ENCODE measurements at regions of chr9 and their contacts with region 1.

Region 1: DNA sequence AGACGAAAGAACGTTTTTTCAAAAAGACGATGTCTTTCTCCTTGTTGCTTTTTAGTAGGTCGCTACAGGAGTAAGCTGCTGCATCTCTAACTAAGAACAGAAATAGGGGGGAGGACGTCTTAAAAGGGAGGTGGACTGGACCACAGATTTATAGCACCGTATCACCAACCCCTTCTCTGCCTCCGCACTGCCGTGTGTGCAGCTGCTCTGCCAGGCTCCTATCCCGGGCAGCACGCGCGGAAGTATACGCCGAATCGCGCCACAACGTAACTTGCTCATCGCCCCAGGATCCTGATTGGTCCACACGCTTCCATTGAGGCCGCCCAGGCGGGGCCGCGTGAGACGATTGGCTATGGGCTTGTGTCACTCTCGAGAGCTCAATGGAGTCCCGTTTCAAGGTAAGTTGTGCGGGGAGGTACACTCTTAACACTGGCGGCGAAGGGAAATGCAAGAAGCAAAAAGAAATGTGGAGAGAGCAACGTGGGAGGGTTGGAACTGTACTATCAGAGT is at the start of gene ELAVL2:
- DNase-seq: peak; percentile 98
- ATAC-seq: peak; percentile 84
- H3K4me3 ChIP-seq: peak within 1 kb of the TSS; percentile 79
- H3K27ac ChIP-seq: no peak within 1 kb of the TSS
- H3K4me1 ChIP-seq: peaks cover 14% of the 10 kb centered on the region
- H3K27me3 ChIP-seq: peaks cover 15% of the 10 kb centered on the region
- CTCF ChIP-seq: no peak
- total RNA-seq, gene ELAVL2: 10.9 and 16.3 TPM in 2 replicates

Region 2: GRCh38 chr9:23123048-23123632 is 703.0 kb before region 1 on chr9:
- CTCF ChIA-PET with region 1: no interaction called
- POLR2A ChIA-PET with region 1: no interaction called
- intact Hi-C with region 1: loop called (anchors 10 kb)
- DNase-seq: peak; percentile 52
- ATAC-seq: no peak; the same call in 1 of the 2 replicates
- H3K4me3 ChIP-seq: no peak overlapping the region
- H3K27ac ChIP-seq: no peak overlapping the region
- H3K4me1 ChIP-seq: no peaks in the 10 kb centered on the region
- H3K27me3 ChIP-seq: no peaks in the 10 kb centered on the region
- CTCF ChIP-seq: peak; percentile 78

Region 3: GRCh38 chr9:23342291-23342690 is 483.9 kb before region 1 on chr9:
- CTCF ChIA-PET with region 1: no interaction called
- POLR2A ChIA-PET with region 1: no interaction called
- intact Hi-C with region 1: loop called (anchors 10 kb)
- DNase-seq: peak; percentile 67
- ATAC-seq: peak; percentile 91
- H3K4me3 ChIP-seq: peak overlapping the region; percentile 30; the same call in 1 of the 2 replicates
- H3K27ac ChIP-seq: no peak overlapping the region
- H3K4me1 ChIP-seq: peaks cover 24% of the 10 kb centered on the region
- H3K27me3 ChIP-seq: no peaks in the 10 kb centered on the region
- CTCF ChIP-seq: no peak

Region 4: DNA sequence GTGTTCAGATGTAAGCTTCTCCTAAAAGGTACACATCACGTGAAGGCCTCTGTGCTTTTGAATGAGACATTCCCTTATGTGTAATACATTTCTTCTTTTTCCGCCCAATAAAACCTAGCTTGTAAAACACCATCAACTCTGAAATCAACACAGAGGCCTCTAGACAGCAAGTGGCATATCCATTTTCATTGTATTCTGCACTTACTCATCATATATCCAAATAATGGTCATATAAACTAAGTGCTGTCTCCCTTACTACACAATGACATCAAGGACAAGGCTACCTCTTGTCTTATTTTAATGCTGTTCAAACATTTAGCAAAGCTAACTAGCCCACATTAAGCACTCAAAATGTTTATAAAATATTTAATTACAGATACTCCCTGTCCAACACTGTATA is 108.7 kb before region 1 on chr9:
- CTCF ChIA-PET with region 1: no interaction called
- POLR2A ChIA-PET with region 1: no interaction called
- intact Hi-C with region 1: loop called (anchors 2 kb)
- DNase-seq: peak; percentile 77
- ATAC-seq: peak; percentile 97
- H3K4me3 ChIP-seq: no peak overlapping the region
- H3K27ac ChIP-seq: 0 out of 2 replicates have a peak overlapping the region, but pooled peaks have one; percentile 16
- H3K4me1 ChIP-seq: peaks cover 14% of the 10 kb centered on the region
- H3K27me3 ChIP-seq: no peaks in the 10 kb centered on the region
- CTCF ChIP-seq: no peak

Region 5: DNA sequence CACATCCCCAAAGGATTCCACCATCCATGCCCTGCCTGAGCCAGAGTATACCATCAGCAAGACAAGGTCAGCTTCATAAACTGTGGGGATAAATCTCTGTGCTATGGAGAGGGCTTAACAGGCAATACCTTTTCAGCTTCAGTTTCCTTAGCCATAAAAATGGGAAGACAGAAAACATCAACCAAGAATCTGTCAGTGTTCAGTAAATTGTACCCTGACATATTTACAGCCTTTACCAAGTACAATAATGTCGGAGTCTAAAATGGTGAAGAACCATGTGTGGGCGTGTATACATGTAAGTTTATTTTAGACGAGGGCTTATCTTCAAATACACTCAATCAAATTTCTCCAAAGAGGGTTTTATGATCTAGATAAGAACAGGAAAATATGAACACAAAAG is 94.8 kb before region 1 on chr9:
- CTCF ChIA-PET with region 1: no interaction called
- POLR2A ChIA-PET with region 1: interaction called, 3 read pairs
- intact Hi-C with region 1: loop called (anchors 5 kb)
- DNase-seq: no peak
- ATAC-seq: no peak
- H3K4me3 ChIP-seq: no peak overlapping the region
- H3K27ac ChIP-seq: no peak overlapping the region
- H3K4me1 ChIP-seq: peaks cover 18% of the 10 kb centered on the region
- H3K27me3 ChIP-seq: no peaks in the 10 kb centered on the region
- CTCF ChIP-seq: no peak